CD4-positive, alpha-beta T cell (primary cell): ENCODE measurements at regions of chr10 and their contacts with region 1.

Region 1: GRCh38 chr10:119663866-119664616 is 12.9 kb downstream of the BAG3 start:
- DNase-seq: peak in 13 of 14 experiments; percentile 18 to 83 (median 29)
- ATAC-seq: peak; percentile 94
- H3K4me3 ChIP-seq: peak overlapping the region; percentile 36
- H3K4me3 Mint-ChIP-seq: peak overlapping the region; percentile 77
- H3K27ac ChIP-seq: peak overlapping the region; percentile 21 to 69
- H3K27ac Mint-ChIP-seq: peak overlapping the region; percentile 91
- H3K4me1 ChIP-seq: peaks cover 76% of the 10 kb centered on the region
- H3K4me1 Mint-ChIP-seq: peaks cover 76% of the 10 kb centered on the region
- H3K27me3 ChIP-seq: no peaks in the 10 kb centered on the region
- H3K27me3 Mint-ChIP-seq: no peaks in the 10 kb centered on the region
- CTCF ChIP-seq: no peak

Region 2: DNA sequence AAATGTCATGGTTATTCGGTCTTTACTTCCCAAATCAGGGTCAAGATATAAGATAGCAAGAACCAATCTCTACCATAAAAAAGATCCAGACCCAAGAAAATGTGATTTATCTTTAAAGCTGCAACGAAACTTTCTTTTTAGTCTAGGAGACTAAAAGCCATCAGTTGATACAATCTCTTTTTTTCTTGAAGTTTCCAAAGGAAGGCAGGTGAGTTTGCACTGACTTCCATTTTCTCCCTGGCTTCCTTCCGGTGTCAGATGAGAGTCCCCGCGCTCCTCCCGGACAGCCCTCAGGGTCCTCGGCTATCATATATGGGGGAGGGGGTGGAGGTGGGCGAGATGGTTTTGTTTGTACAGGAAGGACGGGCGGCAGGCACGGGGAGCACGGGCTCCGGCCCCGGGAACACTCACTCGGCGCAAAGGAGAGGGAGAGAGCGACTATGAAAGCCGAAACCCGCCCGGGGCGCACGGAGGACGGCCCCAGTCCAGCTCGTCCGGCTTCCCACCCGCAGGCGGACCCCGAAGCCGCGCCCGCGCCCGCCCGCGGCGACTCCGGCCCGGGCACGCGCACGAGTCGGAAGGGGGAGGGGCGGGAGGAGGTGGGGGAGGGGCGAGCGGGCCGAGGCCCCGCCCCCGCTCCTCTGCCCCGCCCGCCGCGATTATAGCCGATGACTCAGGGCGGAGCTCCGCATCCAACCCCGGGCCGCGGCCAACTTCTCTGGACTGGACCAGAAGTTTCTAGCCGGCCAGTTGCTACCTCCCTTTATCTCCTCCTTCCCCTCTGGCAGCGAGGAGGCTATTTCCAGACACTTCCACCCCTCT is 13.1 kb before region 1 on chr10 and contains the start of gene BAG3:
- CTCF ChIA-PET with region 1: interaction called, 7 read pairs
- POLR2A ChIA-PET with region 1: interaction called, 42 read pairs
- intact Hi-C with region 1: loop called in 1 of 2 experiments (anchors 1 kb)
- DNase-seq: peak; percentile 60 to 89 (median 76)
- ATAC-seq: peak; percentile 52
- H3K4me3 ChIP-seq: peak within 1 kb of the TSS; percentile 72
- H3K4me3 Mint-ChIP-seq: peak within 1 kb of the TSS; percentile 100
- H3K27ac ChIP-seq: peak within 1 kb of the TSS; percentile 77 to 88
- H3K27ac Mint-ChIP-seq: peak within 1 kb of the TSS; percentile 99
- H3K4me1 ChIP-seq: peaks cover 27% of the 10 kb centered on the region
- H3K4me1 Mint-ChIP-seq: peaks cover 49% of the 10 kb centered on the region
- H3K27me3 ChIP-seq: no peaks in the 10 kb centered on the region
- H3K27me3 Mint-ChIP-seq: no peaks in the 10 kb centered on the region
- CTCF ChIP-seq: no peak
- total RNA-seq, gene BAG3: 65.1 to 65.8 TPM

Region 3: DNA sequence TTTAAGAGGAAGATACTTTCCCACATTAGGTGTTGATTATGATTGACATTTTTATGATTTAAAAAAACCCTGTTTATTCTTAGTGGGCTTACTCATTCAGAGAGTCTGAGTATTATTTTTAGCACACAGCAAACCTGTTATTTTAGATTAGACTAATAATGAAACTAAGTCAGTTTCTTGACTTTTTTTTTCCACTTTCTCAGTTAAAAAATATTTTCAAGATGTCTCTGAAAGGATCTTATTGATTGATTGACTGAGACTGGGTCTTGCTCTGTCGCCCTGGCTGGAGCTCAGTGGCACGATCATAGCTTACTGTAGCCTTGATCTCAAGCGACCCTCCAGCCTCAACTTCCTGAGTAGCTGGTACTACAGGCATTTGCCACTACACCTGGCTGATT is 41.4 kb after region 1 on chr10:
- CTCF ChIA-PET with region 1: no interaction called
- POLR2A ChIA-PET with region 1: no interaction called
- intact Hi-C with region 1: no loop called
- DNase-seq: peak in 1 of 14 experiments; percentile 23
- ATAC-seq: no peak
- H3K4me3 ChIP-seq: no peak overlapping the region
- H3K4me3 Mint-ChIP-seq: no peak overlapping the region
- H3K27ac ChIP-seq: no peak overlapping the region
- H3K27ac Mint-ChIP-seq: peak overlapping the region; percentile 51
- H3K4me1 ChIP-seq: peaks cover 9% of the 10 kb centered on the region
- H3K4me1 Mint-ChIP-seq: peaks cover 17% of the 10 kb centered on the region
- H3K27me3 ChIP-seq: no peaks in the 10 kb centered on the region
- H3K27me3 Mint-ChIP-seq: no peaks in the 10 kb centered on the region
- CTCF ChIP-seq: no peak

Region 4: DNA sequence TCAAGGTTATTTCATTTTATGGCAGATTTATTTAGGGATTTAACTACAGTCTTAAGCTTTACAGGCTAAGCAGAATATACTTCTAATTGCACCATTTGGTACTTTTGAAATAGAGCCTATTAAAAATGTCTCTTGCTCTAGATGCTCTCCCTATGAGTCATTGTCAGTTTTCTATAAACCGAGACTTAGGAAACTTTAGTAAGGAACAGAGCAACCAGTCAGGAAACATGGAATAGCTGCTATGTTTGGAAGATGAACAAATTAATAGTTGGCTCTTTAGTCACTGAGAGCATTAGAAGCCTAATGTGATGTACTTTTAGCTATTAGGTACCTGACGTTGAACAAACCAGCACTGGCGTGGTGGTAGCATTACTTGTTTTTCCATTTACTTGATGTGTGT is 97.1 kb after region 1 on chr10:
- CTCF ChIA-PET with region 1: no interaction called
- POLR2A ChIA-PET with region 1: no interaction called
- intact Hi-C with region 1: no loop called
- DNase-seq: no peak
- ATAC-seq: no peak
- H3K4me3 ChIP-seq: no peak overlapping the region
- H3K4me3 Mint-ChIP-seq: no peak overlapping the region
- H3K27ac ChIP-seq: no peak overlapping the region
- H3K27ac Mint-ChIP-seq: no peak overlapping the region
- H3K4me1 ChIP-seq: no peaks in the 10 kb centered on the region
- H3K4me1 Mint-ChIP-seq: no peaks in the 10 kb centered on the region
- H3K27me3 ChIP-seq: no peaks in the 10 kb centered on the region
- H3K27me3 Mint-ChIP-seq: no peaks in the 10 kb centered on the region
- CTCF ChIP-seq: no peak